HCT116 (cell line): ENCODE measurements at regions of chr16 and their contacts with region 1.

Region 1: GRCh38 chr16:86575754-86576557 is 2.4 kb upstream of the FOXL1 start:
- DNase-seq: peak; percentile 97
- ATAC-seq: peak; percentile 95
- H3K4me3 ChIP-seq: peak overlapping the region; percentile 62 to 63
- H3K27ac ChIP-seq: peak overlapping the region; percentile 55
- H3K4me1 ChIP-seq: peaks cover 11 to 22% of the 10 kb centered on the region in 2 experiments; a peak in 3 of 4 replicates
- H3K27me3 ChIP-seq: no peaks in the 10 kb centered on the region
- CTCF ChIP-seq: peak; percentile 86 to 98 (median 88)
- POLR2A ChIP-seq: peak; percentile 60
- RAD21 ChIP-seq: peak; percentile 95

Region 2: GRCh38 chr16:86142801-86143236 is 433.1 kb before region 1 on chr16:
- CTCF ChIA-PET with region 1: no interaction called
- POLR2A ChIA-PET with region 1: no interaction called
- RAD21 ChIA-PET with region 1: no interaction called
- intact Hi-C with region 1: no loop called
- DNase-seq: no peak
- ATAC-seq: no peak
- H3K4me3 ChIP-seq: no peak overlapping the region
- H3K27ac ChIP-seq: no peak overlapping the region
- H3K4me1 ChIP-seq: no peaks in the 10 kb centered on the region
- H3K27me3 ChIP-seq: peaks cover 3% of the 10 kb centered on the region; the same call in 1 of the 2 replicates
- CTCF ChIP-seq: no peak
- POLR2A ChIP-seq: no peak
- RAD21 ChIP-seq: no peak

Region 3: DNA sequence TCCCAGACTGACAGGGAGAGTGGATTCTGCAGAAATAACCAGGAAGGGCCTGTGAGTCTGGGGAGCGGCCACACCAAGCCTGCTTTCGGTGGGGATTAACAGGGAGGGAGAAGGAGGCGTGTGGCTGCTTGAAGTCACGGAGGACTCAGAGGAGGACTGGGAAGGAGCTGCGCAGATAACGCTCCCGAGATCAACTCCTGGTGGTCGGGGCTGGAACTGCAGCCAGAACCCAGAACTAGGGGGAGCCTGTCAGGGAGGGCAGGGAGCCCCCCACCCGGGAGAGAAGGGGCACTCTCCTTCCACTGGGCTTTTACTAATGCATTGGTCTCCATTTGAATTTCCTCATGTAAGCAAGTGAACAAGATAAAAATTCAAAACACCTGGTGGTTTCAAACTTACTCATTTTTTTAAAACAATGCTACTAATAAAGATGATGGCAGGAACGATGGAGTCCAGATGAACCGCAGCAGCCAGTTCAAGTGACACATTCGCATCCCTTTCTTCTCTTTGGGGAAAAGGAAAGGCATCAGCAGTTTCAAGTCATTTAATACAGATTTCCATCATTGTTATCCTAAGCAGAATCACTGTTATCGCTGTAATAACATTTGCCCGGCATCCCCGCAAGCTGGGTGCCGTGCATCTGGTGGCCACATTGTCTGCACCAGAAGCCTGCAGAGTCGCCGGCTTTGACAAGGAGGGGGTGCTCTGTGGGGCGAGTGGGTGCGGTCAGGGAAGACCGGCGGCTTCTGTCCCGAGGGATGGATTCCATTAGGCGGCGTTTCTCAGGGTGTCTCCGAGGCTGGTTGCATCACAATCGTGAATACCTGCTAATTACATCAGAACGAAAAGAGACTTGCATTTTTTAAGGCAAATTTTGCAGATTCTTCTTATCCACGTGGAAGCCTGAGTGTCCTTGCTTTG is 185.4 kb after region 1 on chr16:
- CTCF ChIA-PET with region 1: interaction called, 12 read pairs
- POLR2A ChIA-PET with region 1: interaction called, 3 read pairs
- RAD21 ChIA-PET with region 1: interaction called in 1 of 2 experiments, 3 read pairs
- intact Hi-C with region 1: loop called (anchors 1 kb)
- DNase-seq: peak; percentile 51
- ATAC-seq: peak; percentile 92
- H3K4me3 ChIP-seq: no peak overlapping the region
- H3K27ac ChIP-seq: no peak overlapping the region
- H3K4me1 ChIP-seq: peaks cover 0 to 4% of the 10 kb centered on the region in 2 experiments; a peak in 3 of 4 replicates
- H3K27me3 ChIP-seq: peaks cover 37% of the 10 kb centered on the region
- CTCF ChIP-seq: peak; percentile 79 to 99 (median 97)
- POLR2A ChIP-seq: no peak
- RAD21 ChIP-seq: peak; percentile 77

Region 4: DNA sequence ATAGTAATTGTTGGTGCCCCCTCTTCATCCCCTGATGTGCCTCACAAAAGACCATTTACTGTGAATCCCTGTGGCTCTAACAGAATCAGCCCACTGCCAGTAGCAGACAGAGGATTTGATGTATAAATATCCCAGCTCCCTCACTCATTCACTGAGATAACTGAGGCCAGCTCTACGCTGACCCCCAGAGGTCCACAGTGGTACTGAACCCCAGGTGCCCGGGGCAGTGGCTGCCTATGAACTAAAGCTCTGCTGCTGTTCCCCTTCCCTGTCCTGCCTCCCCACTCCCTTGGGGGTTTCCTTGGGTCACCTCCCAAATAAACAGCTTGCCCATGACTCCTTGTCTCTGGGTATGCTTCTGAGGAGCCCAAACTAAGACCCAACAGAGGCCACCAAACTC is 298.2 kb after region 1 on chr16:
- CTCF ChIA-PET with region 1: interaction called, 16 read pairs
- POLR2A ChIA-PET with region 1: interaction called, 4 read pairs
- RAD21 ChIA-PET with region 1: interaction called, 4 to 11 read pairs
- intact Hi-C with region 1: loop called (anchors 1 kb)
- DNase-seq: peak; percentile 6
- ATAC-seq: peak; percentile 89
- H3K4me3 ChIP-seq: no peak overlapping the region
- H3K27ac ChIP-seq: no peak overlapping the region
- H3K4me1 ChIP-seq: no peaks in the 10 kb centered on the region
- H3K27me3 ChIP-seq: peaks cover 34% of the 10 kb centered on the region; the same call in 1 of the 2 replicates
- CTCF ChIP-seq: peak; percentile 80 to 96 (median 89)
- POLR2A ChIP-seq: no peak
- RAD21 ChIP-seq: peak; percentile 77

Region 5: DNA sequence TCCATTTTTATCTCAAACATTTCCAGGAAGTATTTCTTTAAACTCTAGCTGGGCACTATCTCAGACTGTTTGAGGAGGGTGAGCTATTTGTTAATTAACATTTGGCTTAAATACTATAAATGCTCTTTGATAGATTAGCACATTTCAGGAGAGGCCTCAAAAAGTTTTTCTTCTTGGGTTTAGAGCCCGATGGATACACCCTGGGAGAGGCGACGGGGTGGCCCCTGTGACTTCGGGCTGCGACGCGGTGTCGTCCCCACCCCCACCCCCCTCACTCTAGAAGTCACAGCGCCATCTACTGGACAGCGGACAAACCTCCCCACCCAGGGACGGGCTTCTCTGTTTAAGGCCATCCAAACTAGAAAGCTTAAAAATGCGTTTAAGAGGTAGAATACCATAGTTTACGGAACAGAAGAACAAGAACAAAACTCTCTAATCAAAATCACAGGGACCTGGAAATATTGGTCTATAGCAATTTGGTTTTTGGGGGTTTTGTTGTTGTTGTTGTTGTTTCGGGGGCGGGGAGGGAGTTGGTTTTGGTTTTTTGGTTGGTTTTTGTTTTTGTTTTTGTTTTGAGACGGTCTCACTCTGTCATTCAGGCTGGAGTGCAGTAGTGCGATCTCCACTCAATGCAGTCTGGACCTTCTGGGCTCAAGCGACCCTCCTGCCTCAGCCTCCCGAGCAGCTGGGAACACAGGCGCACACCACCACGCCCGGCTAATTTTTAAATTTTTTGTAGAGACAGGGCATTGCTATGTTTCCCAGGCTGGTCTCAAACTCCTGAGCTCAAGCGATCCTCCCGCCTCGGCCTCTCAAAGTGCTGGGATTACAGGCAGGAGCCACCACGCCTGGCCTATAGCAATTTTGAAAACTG is 486.9 kb after region 1 on chr16:
- CTCF ChIA-PET with region 1: interaction called, 22 read pairs
- POLR2A ChIA-PET with region 1: interaction called, 3 read pairs
- RAD21 ChIA-PET with region 1: interaction called, 3 to 14 read pairs
- intact Hi-C with region 1: loop called (anchors 5 kb)
- DNase-seq: peak; percentile 62
- ATAC-seq: peak; percentile 99
- H3K4me3 ChIP-seq: peak overlapping the region; percentile 29 to 35
- H3K27ac ChIP-seq: no peak overlapping the region
- H3K4me1 ChIP-seq: peaks cover 0 to 9% of the 10 kb centered on the region in 2 experiments; a peak in 2 of 4 replicates
- H3K27me3 ChIP-seq: no peaks in the 10 kb centered on the region
- CTCF ChIP-seq: peak; percentile 95 to 100 (median 97)
- POLR2A ChIP-seq: no peak
- RAD21 ChIP-seq: peak; percentile 95

Region 6: DNA sequence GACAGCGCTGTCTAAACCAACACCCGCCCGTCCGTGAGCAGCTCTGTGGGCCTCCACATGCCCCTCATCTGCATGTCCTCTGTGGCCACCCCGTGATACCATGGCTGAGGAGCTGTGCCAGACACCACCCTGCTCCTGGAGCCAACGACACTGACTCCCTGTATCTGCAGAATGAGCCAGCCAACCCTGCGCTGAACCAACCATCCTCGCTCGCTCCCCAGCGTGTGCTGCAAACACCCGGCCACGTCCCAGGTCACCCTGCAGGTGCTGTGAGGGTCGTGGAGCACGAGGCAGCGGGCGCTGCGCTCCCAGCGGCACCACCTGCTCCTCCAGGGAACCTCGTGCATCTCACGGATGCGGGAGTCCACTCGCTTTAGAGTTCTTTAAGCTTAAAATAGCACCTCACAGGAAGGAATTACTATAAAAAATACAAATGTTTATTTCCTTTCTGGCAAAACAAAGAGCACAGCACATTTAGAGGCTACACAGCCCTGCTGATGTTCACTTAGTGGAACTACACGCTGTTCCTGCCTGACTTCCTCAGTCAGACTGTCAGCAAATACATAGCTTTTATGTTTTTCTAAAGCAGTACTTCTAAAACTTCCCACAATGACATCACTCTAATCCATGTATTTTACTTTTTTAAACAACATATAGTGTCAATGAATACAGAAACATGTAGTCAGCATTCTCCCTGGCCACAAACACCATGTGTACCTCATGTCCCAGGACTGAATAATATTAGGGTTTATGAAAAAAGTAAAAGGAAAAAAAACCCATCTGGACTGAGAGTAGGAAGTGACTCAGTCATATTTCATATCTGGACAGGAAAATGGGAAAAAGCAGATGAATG is 859.6 kb after region 1 on chr16:
- CTCF ChIA-PET with region 1: no interaction called
- POLR2A ChIA-PET with region 1: no interaction called
- RAD21 ChIA-PET with region 1: no interaction called
- intact Hi-C with region 1: no loop called
- DNase-seq: no peak
- ATAC-seq: no peak
- H3K4me3 ChIP-seq: no peak overlapping the region
- H3K27ac ChIP-seq: no peak overlapping the region
- H3K4me1 ChIP-seq: no peaks in the 10 kb centered on the region
- H3K27me3 ChIP-seq: no peaks in the 10 kb centered on the region
- CTCF ChIP-seq: no peak
- POLR2A ChIP-seq: no peak
- RAD21 ChIP-seq: no peak